ENCODE measurements at regions of chr10 and their contacts with region 1.

Region 1: GRCh38 chr10:23238015-23238414 is 45.9 kb downstream of the PTF1A start:
- DNase-seq: no peak
- H3K4me3 ChIP-seq: no peak overlapping the region
- H3K27ac ChIP-seq: no peak overlapping the region
- H3K4me1 ChIP-seq: no peaks in the 10 kb centered on the region
- H3K27me3 ChIP-seq: no peaks in the 10 kb centered on the region
- CTCF ChIP-seq: no peak
- POLR2A ChIP-seq: no peak

Region 2: DNA sequence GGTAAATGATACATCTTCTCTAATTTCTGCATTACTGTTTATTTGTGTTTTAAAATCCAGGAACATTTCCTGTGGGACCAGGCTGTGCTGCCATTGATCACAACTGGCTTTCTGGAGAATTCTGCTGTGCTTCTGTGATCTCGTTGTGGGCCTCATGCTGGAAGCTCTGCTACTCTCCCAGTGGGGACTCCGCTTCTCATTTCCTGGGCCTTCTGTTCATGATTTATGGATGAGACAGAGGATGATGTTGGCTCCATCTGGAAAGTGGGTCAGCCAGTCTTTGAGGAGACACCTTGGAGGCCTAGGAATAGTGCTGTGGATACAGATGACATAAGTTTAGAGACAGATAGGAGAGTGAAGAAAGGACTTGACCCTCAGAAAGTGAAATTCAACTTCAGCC is 1921.6 kb after region 1 on chr10:
- CTCF ChIA-PET with region 1: no interaction called
- POLR2A ChIA-PET with region 1: interaction called, 12 read pairs
- dilution Hi-C with region 1: no loop called
- intact Hi-C with region 1: no loop called
- DNase-seq: no peak
- H3K4me3 ChIP-seq: no peak overlapping the region
- H3K27ac ChIP-seq: no peak overlapping the region
- H3K4me1 ChIP-seq: no peaks in the 10 kb centered on the region
- H3K27me3 ChIP-seq: no peaks in the 10 kb centered on the region
- CTCF ChIP-seq: no peak
- POLR2A ChIP-seq: no peak

Measured in endothelial cell of umbilical vein (primary cell).